ENCODE measurements at regions of chr10 and their contacts with region 1.

Region 1: DNA sequence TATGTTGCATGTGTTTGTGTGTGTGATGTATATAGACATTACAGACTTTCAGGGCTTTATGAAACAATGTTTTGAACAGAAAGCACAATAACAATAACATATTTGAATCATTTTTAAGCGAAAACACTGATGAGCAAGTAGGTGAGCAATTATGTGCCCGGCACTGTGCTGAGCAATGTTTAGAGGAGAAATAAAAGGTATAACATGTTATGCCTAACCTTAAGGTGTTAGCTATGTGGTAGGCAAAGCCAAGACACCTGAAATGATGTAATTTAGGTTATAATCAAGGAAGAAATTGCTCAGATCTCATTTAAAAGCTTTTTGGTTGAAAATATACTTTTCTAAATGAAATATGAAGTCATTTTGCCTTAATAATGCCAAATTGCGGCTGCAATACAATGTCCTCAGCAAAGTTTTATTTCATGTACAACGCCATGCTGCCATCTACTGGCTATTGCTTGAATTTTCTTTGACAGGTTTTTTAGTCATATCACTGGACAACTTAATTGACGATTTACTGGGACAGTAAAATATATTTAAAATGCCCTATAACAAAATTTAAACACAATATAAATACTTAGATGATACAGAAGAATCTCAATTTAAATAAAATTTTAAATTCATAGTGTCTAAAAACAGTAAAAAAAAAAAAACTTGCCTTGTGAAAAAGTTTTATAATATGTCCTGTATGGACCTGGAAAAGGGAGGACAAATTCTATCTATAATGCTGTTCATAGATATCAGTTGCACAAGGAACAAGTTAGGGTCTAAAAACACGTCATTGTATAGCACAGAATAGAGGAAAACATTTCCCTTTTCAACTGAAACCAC is 131.1 kb upstream of the CDK1 start:
- DNase-seq: peak in 1 of 2 donors; percentile 84
- H3K4me3 ChIP-seq: no peak overlapping the region
- H3K27ac ChIP-seq: no peak overlapping the region
- H3K4me1 ChIP-seq: peaks cover 0 to 12% (median 4%) of the 10 kb centered on the region in 4 donors
- H3K27me3 ChIP-seq: no peaks in the 10 kb centered on the region
- CTCF ChIP-seq: peak in 5 of 7 experiments; percentile 40 to 77 (median 63)
- EP300 ChIP-seq: no peak
- POLR2A ChIP-seq: no peak

Region 2: DNA sequence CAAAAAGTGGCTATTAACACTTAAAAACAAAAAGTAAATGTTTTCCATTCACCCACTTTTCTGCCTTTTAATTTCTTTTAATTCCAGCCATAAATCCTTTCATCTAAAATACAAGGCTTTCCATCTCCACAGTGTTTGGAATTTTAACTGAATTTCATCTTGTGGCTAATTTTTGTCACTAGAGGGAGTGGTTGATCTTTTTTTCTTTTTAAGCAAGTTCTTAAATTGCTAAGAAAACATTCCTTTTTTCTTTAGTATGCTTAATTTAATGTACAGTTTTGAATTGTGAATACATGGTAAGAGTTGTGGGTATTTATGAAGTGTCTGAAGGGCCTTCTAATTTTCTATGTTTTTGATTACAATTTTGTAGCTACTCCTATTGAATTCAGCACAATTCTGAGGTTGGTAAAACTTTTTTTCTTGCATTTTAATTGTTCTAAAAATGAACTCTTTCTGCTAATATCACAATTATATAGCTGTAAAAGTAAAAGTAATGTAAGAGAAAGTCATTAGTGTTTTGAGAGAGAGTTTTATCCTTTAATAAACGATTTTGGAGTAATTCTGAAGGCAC is 202.6 kb before region 1 on chr10:
- intact Hi-C with region 1: loop called (anchors 5 kb)
- DNase-seq: peak in 1 of 2 donors; percentile 54
- H3K4me3 ChIP-seq: no peak overlapping the region
- H3K27ac ChIP-seq: no peak overlapping the region
- H3K4me1 ChIP-seq: peaks cover 0 to 22% (median 17%) of the 10 kb centered on the region in 4 donors
- H3K27me3 ChIP-seq: no peaks in the 10 kb centered on the region
- CTCF ChIP-seq: peak in 5 of 7 experiments; percentile 31 to 52 (median 48)
- EP300 ChIP-seq: no peak
- POLR2A ChIP-seq: no peak